OCI-LY7 (cell line): ENCODE measurements at regions of chr19 and their contacts with region 1.

Region 1: GRCh38 chr19:21328885-21329605 is at the start of gene ZNF708:
- DNase-seq: peak; percentile 95
- H3K4me3 ChIP-seq: peak within 1 kb of the TSS; percentile 94
- H3K27ac ChIP-seq: peak within 1 kb of the TSS; percentile 78
- H3K4me1 ChIP-seq: peaks cover 8% of the 10 kb centered on the region
- CTCF ChIP-seq: no peak
- total RNA-seq, gene ZNF708: 26.5 and 38.2 TPM in 2 replicates

Region 2: GRCh38 chr19:20776083-20777076 is 552.7 kb before region 1 on chr19 and contains the start of gene ZNF66:
- CTCF ChIA-PET with region 1: no interaction called
- POLR2A ChIA-PET with region 1: no interaction called
- intact Hi-C with region 1: loop called (anchors 10 kb)
- DNase-seq: peak; percentile 99
- H3K4me3 ChIP-seq: peak within 1 kb of the TSS; percentile 85
- H3K27ac ChIP-seq: peak within 1 kb of the TSS; percentile 77
- H3K4me1 ChIP-seq: peaks cover 3% of the 10 kb centered on the region
- CTCF ChIP-seq: no peak
- total RNA-seq, gene ZNF66: 32.4 and 34.2 TPM in 2 replicates

Region 3: GRCh38 chr19:21358768-21359451 is 29.9 kb after region 1 on chr19 and contains the start of gene ZNF738:
- CTCF ChIA-PET with region 1: no interaction called
- POLR2A ChIA-PET with region 1: interaction called, 14 read pairs
- intact Hi-C with region 1: loop called (anchors 2 kb)
- DNase-seq: peak; percentile 97
- H3K4me3 ChIP-seq: peak within 1 kb of the TSS; percentile 92
- H3K27ac ChIP-seq: peak within 1 kb of the TSS; percentile 75
- H3K4me1 ChIP-seq: peaks cover 13% of the 10 kb centered on the region
- CTCF ChIP-seq: no peak
- total RNA-seq, gene ZNF738: 57.0 and 85.0 TPM in 2 replicates

Region 4: GRCh38 chr19:21396893-21397572 is 68.0 kb after region 1 on chr19 and contains the start of gene ZNF493:
- CTCF ChIA-PET with region 1: no interaction called
- POLR2A ChIA-PET with region 1: interaction called, 4 read pairs
- intact Hi-C with region 1: loop called (anchors 5 kb)
- DNase-seq: peak; percentile 98
- H3K4me3 ChIP-seq: peak within 1 kb of the TSS; percentile 91
- H3K27ac ChIP-seq: peak within 1 kb of the TSS; percentile 42
- H3K4me1 ChIP-seq: peaks cover 15% of the 10 kb centered on the region
- CTCF ChIP-seq: no peak
- total RNA-seq, gene ZNF493: 57.6 and 75.1 TPM in 2 replicates

Region 5: DNA sequence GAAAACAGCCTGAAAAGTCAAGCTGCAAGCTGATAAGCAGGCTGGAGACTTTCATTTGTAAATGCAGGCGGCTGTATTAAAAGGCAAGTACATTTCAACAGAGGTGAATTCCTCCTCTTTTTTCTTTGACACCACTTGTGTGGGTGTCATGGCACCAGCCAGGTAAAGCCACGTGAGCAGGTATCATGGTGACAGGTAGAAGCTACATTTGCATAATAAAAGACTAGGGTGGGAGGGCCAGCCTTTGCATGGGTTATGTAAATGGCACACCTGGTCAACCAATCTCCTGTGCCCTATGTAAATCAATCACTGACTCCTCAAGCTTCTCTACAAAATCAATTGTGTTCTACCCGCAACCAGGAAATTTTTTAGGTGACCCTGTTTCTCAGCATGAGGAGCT is 370.2 kb after region 1 on chr19:
- CTCF ChIA-PET with region 1: no interaction called
- POLR2A ChIA-PET with region 1: no interaction called
- intact Hi-C with region 1: no loop called
- DNase-seq: no peak
- H3K4me3 ChIP-seq: no peak overlapping the region
- H3K27ac ChIP-seq: no peak overlapping the region
- H3K4me1 ChIP-seq: no peaks in the 10 kb centered on the region
- CTCF ChIP-seq: no peak